ENCODE measurements at regions of chr1 and their contacts with region 1.

Region 1: GRCh38 chr1:248837794-248838356 is at the start of gene ZNF672:
- DNase-seq: peak; percentile 92
- ATAC-seq: peak; percentile 85
- H3K4me3 ChIP-seq: peak within 1 kb of the TSS; percentile 69 to 84
- H3K27ac ChIP-seq: peak within 1 kb of the TSS; percentile 97
- H3K4me1 ChIP-seq: peaks cover 5 to 24% of the 10 kb centered on the region in 2 experiments; a peak in 3 of 4 replicates
- H3K27me3 ChIP-seq: no peaks in the 10 kb centered on the region
- CTCF ChIP-seq: no peak
- POLR2A ChIP-seq: peak; percentile 95
- RAD21 ChIP-seq: no peak
- total RNA-seq, gene ZNF672: 27.6 TPM

Region 2: DNA sequence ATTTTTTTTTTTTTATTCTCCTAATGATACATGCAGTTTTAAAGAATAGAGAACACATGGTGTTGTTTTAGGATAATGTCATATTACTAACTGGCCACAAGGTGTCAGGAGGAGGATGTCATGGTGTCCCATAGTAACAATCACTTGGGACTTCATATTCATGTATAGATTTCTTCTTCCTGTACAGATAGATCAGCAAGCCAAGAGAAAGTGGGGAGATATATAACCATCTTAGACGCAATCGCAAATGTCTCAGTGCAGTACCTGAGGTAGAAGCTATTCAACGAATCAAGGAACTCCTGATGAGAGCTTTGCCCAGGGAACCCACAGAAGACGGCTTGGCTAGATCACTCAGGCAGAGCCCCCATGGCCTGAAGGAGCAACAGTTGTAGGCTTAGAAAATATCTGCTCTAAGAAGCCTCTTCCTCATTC is 215.3 kb before region 1 on chr1:
- CTCF ChIA-PET with region 1: no interaction called
- POLR2A ChIA-PET with region 1: no interaction called
- RAD21 ChIA-PET with region 1: no interaction called
- intact Hi-C with region 1: no loop called
- DNase-seq: peak; percentile 6
- ATAC-seq: peak; percentile 79
- H3K4me3 ChIP-seq: no peak overlapping the region
- H3K27ac ChIP-seq: no peak overlapping the region
- H3K4me1 ChIP-seq: no peaks in the 10 kb centered on the region
- H3K27me3 ChIP-seq: no peaks in the 10 kb centered on the region
- CTCF ChIP-seq: peak; percentile 38 to 59 (median 52); a peak in 5 of 6 replicates
- POLR2A ChIP-seq: no peak
- RAD21 ChIP-seq: peak; percentile 67

Region 3: DNA sequence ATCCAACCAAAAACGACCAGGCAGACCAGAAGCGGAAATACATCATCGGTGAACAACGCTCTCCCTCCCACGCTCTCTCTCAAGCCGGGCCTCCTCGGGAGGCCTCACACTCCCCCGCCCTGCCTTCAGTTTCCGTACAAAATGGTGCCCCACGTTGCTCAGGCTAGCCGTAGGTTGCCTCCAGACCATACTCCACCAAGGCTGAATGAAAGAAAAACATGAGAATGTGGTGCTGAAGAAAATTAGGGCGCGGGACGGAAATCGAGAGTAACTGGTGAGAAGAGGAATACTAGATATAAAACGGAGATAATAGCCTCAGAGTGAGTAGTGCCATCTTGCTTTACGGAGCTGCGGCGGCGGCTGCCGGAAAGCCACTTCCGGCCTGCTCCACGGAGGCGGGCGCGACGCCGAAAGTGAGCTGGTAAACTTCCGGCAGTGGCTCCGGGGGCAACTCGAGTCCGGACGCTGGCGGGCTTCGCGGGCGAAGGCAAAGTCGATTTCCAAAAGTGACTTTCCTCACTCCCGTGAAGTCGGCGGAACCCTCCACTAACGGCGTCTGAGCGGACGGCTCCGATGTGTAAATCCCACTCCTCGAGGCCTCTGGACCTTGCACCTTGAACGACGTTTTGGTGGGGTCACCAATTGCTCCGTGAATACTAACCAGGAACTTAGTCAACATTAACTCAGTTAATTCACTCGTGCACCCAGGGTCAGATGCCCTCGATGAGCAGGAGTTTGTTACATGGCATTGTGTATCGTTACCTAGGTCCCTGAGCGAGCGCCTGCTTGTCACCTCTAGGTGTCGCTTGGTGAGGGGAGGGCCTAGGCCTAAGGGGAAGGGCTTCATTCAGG is 11.7 kb before region 1 on chr1 and contains the start of gene SH3BP5L:
- CTCF ChIA-PET with region 1: interaction called, 12 read pairs
- POLR2A ChIA-PET with region 1: interaction called, 49 read pairs
- RAD21 ChIA-PET with region 1: interaction called in 1 of 2 experiments, 4 read pairs
- intact Hi-C with region 1: loop called (anchors 1 kb)
- DNase-seq: peak; percentile 95
- ATAC-seq: peak; percentile 89
- H3K4me3 ChIP-seq: peak within 1 kb of the TSS; percentile 98 to 99
- H3K27ac ChIP-seq: peak within 1 kb of the TSS; percentile 78
- H3K4me1 ChIP-seq: peaks cover 16 to 34% of the 10 kb centered on the region in 2 experiments
- H3K27me3 ChIP-seq: no peaks in the 10 kb centered on the region
- CTCF ChIP-seq: peak; percentile 42 to 81 (median 74); a peak in 5 of 6 replicates
- POLR2A ChIP-seq: no peak
- RAD21 ChIP-seq: no peak; the same call in 1 of the 2 replicates
- total RNA-seq, gene SH3BP5L: 22.3 TPM

Region 4: DNA sequence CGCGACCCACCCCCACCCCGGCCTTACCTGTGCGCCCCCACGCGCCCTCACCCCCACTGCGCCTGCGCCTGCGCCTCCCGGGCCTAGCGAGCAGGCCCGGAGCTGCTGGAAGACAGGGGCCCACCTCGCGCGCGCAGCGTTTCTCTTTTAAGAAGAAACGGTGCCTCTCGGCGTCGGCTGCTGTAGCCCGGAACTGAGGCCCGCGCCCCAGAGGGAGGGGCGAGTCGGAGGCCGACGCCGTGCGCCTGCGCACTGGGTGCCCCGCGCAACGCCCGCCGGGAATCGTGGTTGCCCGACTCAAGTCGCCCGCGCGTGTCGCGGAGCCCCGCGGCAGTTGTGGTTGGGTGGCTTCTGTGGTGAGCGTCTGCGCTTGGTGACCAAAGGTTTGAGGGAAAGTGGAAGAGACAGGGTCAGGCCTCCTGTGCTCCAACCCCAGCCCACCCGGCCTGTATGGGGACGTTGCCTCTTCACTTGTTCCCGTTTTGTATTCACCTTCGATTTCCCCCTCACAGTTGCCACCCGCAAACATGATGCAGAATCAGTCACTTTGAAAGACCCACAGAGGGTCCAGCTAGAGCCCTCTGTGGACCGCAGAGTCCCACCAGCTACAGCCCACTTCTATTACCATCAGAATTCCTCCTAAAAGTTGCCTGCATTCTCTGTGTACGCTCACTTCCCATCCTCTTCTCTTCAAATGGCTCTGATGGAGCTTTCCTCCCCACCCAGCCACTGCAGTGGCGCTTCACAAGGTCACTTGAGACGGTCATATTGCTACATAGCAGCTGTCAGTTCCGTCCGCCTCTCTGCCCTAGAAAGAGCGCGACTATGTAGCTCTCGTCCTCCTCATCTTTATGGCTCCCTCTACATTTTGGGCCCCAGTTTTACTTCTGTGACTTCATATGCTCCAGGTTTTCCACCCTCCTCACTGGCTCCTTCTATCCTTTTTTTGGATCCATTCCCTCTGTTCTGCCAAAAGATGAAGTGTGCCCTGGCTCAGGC is 21.3 kb after region 1 on chr1 and contains the start of gene ZNF692:
- CTCF ChIA-PET with region 1: interaction called, 24 read pairs
- POLR2A ChIA-PET with region 1: interaction called, 44 read pairs
- RAD21 ChIA-PET with region 1: no interaction called
- intact Hi-C with region 1: loop called (anchors 1 kb)
- DNase-seq: peak; percentile 95
- ATAC-seq: peak; percentile 86
- H3K4me3 ChIP-seq: peak within 1 kb of the TSS; percentile 66 to 83
- H3K27ac ChIP-seq: peak within 1 kb of the TSS; percentile 79
- H3K4me1 ChIP-seq: peaks cover 12 to 41% of the 10 kb centered on the region in 2 experiments
- H3K27me3 ChIP-seq: no peaks in the 10 kb centered on the region
- CTCF ChIP-seq: no peak
- POLR2A ChIP-seq: peak; percentile 83
- RAD21 ChIP-seq: no peak
- total RNA-seq, gene ZNF692: 76.2 TPM

Region 5: DNA sequence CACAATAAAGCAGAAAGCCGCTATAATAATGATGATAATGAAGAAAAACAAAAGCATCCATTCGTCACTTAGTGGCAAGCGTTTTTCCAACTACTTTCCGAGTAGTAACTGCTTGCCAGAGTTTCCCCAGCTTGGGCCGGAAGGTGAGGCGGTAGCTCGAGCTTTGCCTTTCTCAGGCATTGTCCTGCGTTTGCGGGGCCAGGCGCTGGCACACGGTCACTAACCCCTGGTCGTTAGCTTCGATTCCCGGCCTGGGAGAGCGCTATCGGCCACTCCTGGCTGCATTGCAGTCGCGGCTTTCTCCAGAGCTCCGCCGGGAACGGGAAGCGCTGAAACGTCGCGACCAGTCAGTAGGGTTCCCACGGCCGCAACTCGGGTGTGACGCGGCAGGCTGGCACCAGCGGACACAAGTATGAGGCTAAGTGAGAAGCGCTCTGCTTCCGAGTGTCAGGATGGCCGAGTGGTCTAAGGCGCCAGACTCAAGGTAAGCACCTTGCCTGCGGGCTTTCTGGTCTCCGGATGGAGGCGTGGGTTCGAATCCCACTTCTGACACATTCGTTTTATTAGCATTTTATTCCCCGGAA is 35.6 kb after region 1 on chr1:
- CTCF ChIA-PET with region 1: interaction called, 6 read pairs
- POLR2A ChIA-PET with region 1: interaction called, 9 read pairs
- RAD21 ChIA-PET with region 1: no interaction called
- intact Hi-C with region 1: loop called (anchors 1 kb)
- DNase-seq: peak; percentile 93
- ATAC-seq: peak; percentile 82
- H3K4me3 ChIP-seq: peak overlapping the region; percentile 51 to 64
- H3K27ac ChIP-seq: peak overlapping the region; percentile 74
- H3K4me1 ChIP-seq: peaks cover 10 to 25% of the 10 kb centered on the region in 2 experiments
- H3K27me3 ChIP-seq: no peaks in the 10 kb centered on the region
- CTCF ChIP-seq: no peak
- POLR2A ChIP-seq: no peak
- RAD21 ChIP-seq: no peak

Region 6: GRCh38 chr1:248906009-248906752 is 68.3 kb after region 1 on chr1 and contains the start of gene PGBD2:
- CTCF ChIA-PET with region 1: no interaction called
- POLR2A ChIA-PET with region 1: interaction called, 3 read pairs
- RAD21 ChIA-PET with region 1: no interaction called
- intact Hi-C with region 1: loop called (anchors 1 kb)
- DNase-seq: peak; percentile 89
- ATAC-seq: peak; percentile 93
- H3K4me3 ChIP-seq: peak within 1 kb of the TSS; percentile 69 to 80
- H3K27ac ChIP-seq: peak within 1 kb of the TSS; percentile 77
- H3K4me1 ChIP-seq: peaks cover 0 to 22% of the 10 kb centered on the region in 2 experiments; a peak in 3 of 4 replicates
- H3K27me3 ChIP-seq: no peaks in the 10 kb centered on the region
- CTCF ChIP-seq: peak; percentile 61 to 82 (median 64)
- POLR2A ChIP-seq: peak; percentile 72
- RAD21 ChIP-seq: peak; percentile 68
- total RNA-seq, gene PGBD2: 5.1 TPM

Region 7: GRCh38 chr1:248924696-248925532 is 87.0 kb after region 1 on chr1:
- CTCF ChIA-PET with region 1: interaction called, 4 read pairs
- POLR2A ChIA-PET with region 1: no interaction called
- RAD21 ChIA-PET with region 1: no interaction called
- intact Hi-C with region 1: loop called (anchors 1 kb)
- DNase-seq: peak; percentile 40
- ATAC-seq: peak; percentile 98
- H3K4me3 ChIP-seq: no peak overlapping the region
- H3K27ac ChIP-seq: no peak overlapping the region
- H3K4me1 ChIP-seq: no peaks in the 10 kb centered on the region
- H3K27me3 ChIP-seq: no peaks in the 10 kb centered on the region
- CTCF ChIP-seq: peak; percentile 70 to 74 (median 72); a peak in 5 of 6 replicates
- POLR2A ChIP-seq: no peak
- RAD21 ChIP-seq: peak; percentile 83